ENCODE measurements at regions of chr1 and their contacts with region 1.

Region 1: DNA sequence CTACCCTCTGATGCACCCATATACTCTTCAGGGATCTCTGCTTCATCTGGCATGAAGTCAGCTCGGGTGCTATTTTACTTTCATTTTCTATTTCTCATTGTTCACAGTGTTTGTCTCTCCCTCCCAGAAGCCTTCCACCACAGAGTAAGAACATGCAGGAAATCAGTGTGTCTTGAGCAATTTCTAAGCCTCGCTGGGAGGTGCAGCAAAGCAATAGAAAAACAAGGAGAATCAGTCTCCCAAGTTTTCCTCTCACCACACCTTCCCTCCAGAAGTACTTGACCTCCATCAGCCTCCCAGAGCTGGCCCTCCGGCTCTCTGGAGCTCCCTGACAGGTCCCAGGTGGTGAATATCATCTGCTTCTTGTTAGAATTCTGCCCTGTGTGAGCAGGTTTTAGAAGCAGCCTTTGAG is 594.7 kb upstream of the CAMK1G start:
- DNase-seq: no peak

Region 2: DNA sequence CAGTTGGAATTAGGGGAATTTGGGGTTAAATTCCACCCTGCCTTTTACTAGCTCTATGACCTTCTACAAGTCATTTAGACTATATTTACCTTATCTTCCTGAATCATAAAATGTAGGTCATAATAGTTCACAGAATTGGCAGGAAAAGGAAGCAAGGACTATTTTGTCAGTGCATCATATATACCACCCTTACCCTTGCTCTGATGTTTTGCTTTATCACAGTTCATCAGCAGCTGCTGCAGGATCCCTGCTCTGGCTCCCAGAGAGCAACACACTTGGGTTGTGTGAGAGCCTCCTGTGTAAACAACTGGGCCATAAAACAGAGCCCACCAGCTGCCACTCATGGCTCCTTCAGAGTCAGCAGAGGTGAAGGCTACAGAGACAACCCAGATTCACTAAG is 36.9 kb before region 1 on chr1:
- intact Hi-C with region 1: loop called (anchors 5 kb)
- DNase-seq: no peak